Motor neuron (in vitro differentiated cells): ENCODE measurements at regions of chr1 and their contacts with region 1.

Region 1: GRCh38 chr1:174217787-174218574 is 58.7 kb downstream of the RABGAP1L start:
- ATAC-seq: peak in 4 of 8 experiments; percentile 34 to 65 (median 58)
- H3K4me3 ChIP-seq: no peak overlapping the region
- H3K27ac ChIP-seq: no peak overlapping the region
- H3K4me1 ChIP-seq: no peaks in the 10 kb centered on the region

Region 2: GRCh38 chr1:173997796-173998195 is 220.2 kb before region 1 on chr1:
- in situ Hi-C with region 1: loop called in 1 of 9 experiments (anchors 25 kb)
- ATAC-seq: no peak
- H3K4me3 ChIP-seq: no peak overlapping the region
- H3K27ac ChIP-seq: no peak overlapping the region
- H3K4me1 ChIP-seq: peaks cover 9 to 10% of the 10 kb centered on the region in 2 donors

Region 3: DNA sequence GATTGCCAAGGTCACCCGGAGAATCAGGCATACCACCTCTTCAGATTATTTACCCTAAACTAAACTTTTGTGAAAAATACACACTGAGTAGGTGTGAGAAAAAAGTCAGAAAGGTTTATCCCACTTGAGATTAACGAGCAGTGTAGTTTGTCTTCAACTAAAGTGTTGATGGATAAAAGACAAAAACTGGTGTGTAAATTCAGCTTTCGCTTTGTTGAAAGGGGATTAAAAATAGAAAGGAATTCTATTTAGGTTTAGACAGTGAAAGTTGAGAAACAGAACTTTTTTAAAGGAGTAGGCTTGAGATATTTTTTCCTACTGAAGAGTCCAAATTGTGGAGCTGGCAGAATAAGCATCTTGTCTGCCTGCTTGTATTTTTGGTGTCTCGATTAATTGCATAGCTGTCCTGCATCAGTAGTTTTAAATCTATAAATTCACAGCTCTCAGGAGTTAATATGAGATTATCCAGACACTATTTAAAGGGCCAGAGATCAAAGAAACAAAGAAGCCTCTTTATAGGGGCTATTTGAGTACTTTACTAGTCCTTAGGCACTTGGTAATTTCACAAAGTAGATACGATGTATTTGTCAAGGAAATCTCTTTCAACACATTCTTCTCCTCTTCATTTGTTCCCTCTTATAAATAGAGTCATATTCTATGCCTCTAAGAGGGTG is 105.4 kb before region 1 on chr1:
- in situ Hi-C with region 1: no loop called
- ATAC-seq: no peak
- H3K4me3 ChIP-seq: no peak overlapping the region
- H3K27ac ChIP-seq: no peak overlapping the region
- H3K4me1 ChIP-seq: no peaks in the 10 kb centered on the region